BJ (cell line): ENCODE measurements at regions of chr7 and their contacts with region 1.

Region 1: GRCh38 chr7:142782922-142783900 is 12.4 kb downstream of the PRSS2 start:
- DNase-seq: peak; percentile 27
- H3K4me3 ChIP-seq: peak overlapping the region; percentile 42
- H3K27me3 ChIP-seq: no peaks in the 10 kb centered on the region; the same call in none of the 2 replicates
- CTCF ChIP-seq: peak; percentile 93

Region 2: GRCh38 chr7:142496545-142497041 is 286.6 kb before region 1 on chr7:
- CTCF ChIA-PET with region 1: interaction called, 25 read pairs
- POLR2A ChIA-PET with region 1: no interaction called
- DNase-seq: no peak
- H3K4me3 ChIP-seq: no peak overlapping the region
- H3K27me3 ChIP-seq: peaks cover 16% of the 10 kb centered on the region
- CTCF ChIP-seq: peak; percentile 77

Region 3: DNA sequence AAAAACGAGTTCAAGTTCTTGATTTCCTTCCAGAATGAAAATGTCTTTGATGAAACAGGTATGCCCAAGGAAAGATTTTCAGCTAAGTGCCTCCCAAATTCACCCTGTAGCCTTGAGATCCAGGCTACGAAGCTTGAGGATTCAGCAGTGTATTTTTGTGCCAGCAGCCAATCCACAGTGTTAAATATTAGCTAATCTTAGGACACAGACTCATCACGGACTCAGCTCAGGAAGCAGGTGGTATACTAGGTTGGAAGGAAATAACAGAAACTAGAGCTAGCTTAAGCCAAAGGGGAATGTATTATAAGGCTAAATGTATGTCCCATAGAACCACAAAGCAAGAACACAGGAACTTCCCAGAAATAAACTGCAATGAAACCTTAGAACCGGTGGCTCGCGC is 184.9 kb before region 1 on chr7:
- CTCF ChIA-PET with region 1: interaction called, 64 read pairs
- POLR2A ChIA-PET with region 1: no interaction called
- DNase-seq: no peak
- H3K4me3 ChIP-seq: no peak overlapping the region
- H3K27me3 ChIP-seq: no peaks in the 10 kb centered on the region
- CTCF ChIP-seq: no peak

Region 4: DNA sequence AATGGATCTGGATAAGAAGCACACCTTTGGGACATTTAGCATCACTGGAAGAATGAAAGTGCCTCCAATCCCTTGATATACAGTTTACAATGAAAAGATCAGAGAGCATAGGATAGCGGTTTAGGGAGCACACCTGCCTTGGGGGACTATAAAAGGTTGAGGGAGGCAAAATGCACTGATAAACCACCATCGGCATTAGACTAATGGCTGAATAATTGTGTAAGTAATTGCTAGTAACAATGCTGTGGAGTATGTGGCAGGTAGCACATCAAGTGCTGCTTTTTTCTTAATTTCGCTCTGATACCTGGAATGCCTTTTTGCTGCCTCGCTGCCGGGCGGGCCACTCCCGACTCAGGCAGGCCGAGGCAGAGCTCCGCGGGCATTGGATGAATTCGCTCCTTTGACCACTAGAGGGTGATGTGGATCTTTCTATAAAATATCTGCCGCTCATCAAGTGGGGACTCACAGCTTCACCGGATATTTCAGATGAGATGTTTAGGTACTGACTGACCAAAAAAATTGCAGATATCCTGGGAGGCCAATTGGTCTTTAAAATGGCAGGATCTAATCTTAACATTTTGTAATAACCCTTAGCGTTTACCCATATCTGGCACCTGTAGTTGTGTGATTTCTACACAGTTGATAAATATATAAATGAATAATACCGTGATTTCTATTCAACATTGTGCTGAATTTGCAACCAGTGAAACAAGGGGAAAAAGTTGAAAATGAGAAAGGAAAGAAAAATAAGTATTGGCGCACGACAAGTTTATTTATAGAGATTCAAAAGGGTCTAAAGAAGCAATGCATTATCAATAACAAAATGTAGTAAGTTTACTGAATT is 150.7 kb before region 1 on chr7:
- CTCF ChIA-PET with region 1: interaction called, 36 read pairs
- POLR2A ChIA-PET with region 1: no interaction called
- DNase-seq: no peak
- H3K4me3 ChIP-seq: no peak overlapping the region
- H3K27me3 ChIP-seq: no peaks in the 10 kb centered on the region
- CTCF ChIP-seq: peak; percentile 79

Region 5: GRCh38 chr7:142760071-142760642 is 23.1 kb before region 1 on chr7:
- CTCF ChIA-PET with region 1: no interaction called
- POLR2A ChIA-PET with region 1: no interaction called
- DNase-seq: no peak
- H3K4me3 ChIP-seq: no peak overlapping the region
- H3K27me3 ChIP-seq: no peaks in the 10 kb centered on the region; the same call in 1 of the 2 replicates
- CTCF ChIP-seq: no peak

Region 6: DNA sequence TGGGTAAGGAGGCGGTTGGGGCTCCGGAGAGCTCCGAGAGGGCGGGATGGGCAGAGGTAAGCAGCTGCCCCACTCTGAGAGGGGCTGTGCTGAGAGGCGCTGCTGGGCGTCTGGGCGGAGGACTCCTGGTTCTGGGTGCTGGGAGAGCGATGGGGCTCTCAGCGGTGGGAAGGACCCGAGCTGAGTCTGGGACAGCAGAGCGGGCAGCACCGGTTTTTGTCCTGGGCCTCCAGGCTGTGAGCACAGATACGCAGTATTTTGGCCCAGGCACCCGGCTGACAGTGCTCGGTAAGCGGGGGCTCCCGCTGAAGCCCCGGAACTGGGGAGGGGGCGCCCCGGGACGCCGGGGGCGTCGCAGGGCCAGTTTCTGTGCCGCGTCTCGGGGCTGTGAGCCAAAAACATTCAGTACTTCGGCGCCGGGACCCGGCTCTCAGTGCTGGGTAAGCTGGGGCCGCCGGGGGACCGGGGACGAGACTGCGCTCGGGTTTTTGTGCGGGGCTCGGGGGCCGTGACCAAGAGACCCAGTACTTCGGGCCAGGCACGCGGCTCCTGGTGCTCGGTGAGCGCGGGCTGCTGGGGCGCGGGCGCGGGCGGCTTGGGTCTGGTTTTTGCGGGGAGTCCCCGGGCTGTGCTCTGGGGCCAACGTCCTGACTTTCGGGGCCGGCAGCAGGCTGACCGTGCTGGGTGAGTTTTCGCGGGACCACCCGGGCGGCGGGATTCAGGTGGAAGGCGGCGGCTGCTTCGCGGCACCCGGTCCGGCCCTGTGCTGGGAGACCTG is 13.6 kb after region 1 on chr7:
- CTCF ChIA-PET with region 1: interaction called, 34 read pairs
- POLR2A ChIA-PET with region 1: no interaction called
- DNase-seq: no peak
- H3K4me3 ChIP-seq: peak overlapping the region; percentile 28
- H3K27me3 ChIP-seq: peaks cover 35% of the 10 kb centered on the region
- CTCF ChIP-seq: no peak